MCF 10A (cell line): ENCODE measurements at regions of chr2 and their contacts with region 1.

Region 1: DNA sequence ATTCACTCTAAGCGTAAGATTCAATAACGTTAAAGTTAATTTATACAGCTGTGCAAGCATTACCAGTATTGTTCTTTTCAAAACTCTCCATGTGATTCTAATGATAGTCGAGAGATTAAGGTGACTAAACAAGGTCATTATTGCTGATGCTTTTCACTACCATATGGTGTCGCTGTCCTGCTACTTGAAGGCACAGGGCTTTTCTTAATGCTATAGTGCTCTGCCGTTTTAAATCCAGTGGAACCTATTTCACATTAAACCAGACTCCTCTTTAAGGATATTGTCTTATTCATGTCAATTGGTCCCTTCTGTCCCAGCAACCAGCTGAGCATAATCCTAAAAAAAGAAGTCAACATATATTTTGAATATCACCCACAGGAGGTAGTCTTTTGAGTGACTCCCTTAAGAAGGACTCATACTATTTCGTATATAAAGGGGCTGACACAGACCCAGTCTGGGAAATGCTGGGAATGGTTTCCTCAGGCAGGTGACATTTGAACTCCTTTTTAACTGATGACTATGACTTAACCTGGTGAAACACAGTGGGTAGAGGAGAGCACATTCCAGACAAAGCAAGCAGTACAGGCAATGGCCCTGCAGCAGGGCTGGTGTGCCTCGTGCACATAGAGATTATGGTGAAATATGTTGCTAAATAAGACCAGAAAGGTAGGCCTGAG is 53.9 kb upstream of the CYTIP start:
- DNase-seq: peak; percentile 54
- H3K4me3 Mint-ChIP-seq: no peak overlapping the region
- H3K27ac Mint-ChIP-seq: no peak overlapping the region
- H3K4me1 Mint-ChIP-seq: no peaks in the 10 kb centered on the region
- H3K27me3 Mint-ChIP-seq: no peaks in the 10 kb centered on the region
- CTCF ChIP-seq: peak; percentile 63

Region 2: DNA sequence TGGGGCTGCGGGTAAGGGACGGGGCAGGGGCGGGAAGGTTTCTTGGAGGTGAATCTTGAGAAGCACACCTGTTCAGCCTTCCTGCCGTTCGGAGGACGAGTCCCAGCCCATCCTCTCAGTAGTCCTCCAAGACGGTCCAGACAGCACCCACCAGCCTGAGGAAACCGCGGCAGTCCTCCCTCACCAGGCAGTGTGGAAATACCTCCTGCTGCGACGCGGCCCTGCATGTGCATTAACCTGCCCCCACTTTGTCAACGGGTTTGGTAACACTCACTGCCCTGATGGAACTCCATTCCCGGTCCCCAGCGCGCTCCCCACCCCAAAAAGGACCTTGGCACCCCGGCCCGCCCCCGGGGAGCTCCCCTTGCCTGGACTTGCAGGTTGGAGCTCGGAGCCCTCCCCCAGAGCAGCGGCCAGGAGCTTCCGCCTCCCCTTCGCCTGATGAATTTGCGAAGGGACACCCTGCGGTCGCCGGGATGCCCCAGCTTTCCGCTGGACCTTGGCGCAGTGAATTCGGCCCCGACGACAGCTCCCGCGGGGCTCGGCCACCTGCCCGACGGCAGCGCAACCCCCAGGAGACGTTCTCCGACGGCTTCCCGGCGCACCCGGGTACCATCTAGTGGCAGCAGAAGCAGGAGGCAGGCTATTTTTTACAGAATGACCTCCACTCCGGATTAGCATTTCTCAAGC is 99.4 kb after region 1 on chr2:
- CTCF ChIA-PET with region 1: no interaction called
- POLR2A ChIA-PET with region 1: no interaction called
- intact Hi-C with region 1: loop called (anchors 2 kb)
- DNase-seq: no peak
- H3K4me3 Mint-ChIP-seq: no peak overlapping the region
- H3K27ac Mint-ChIP-seq: no peak overlapping the region
- H3K4me1 Mint-ChIP-seq: no peaks in the 10 kb centered on the region
- H3K27me3 Mint-ChIP-seq: peaks cover 77% of the 10 kb centered on the region
- CTCF ChIP-seq: no peak